Motor neuron (in vitro differentiated cells): ENCODE measurements at regions of chr3 and their contacts with region 1.

Region 1: GRCh38 chr3:128095222-128095703 is 28.3 kb downstream of the RUVBL1 start:
- ATAC-seq: peak; percentile 94 to 100 (median 97)
- H3K4me3 ChIP-seq: no peak overlapping the region
- H3K27ac ChIP-seq: no peak overlapping the region
- H3K4me1 ChIP-seq: peaks cover 0 to 4% of the 10 kb centered on the region in 2 donors

Region 2: DNA sequence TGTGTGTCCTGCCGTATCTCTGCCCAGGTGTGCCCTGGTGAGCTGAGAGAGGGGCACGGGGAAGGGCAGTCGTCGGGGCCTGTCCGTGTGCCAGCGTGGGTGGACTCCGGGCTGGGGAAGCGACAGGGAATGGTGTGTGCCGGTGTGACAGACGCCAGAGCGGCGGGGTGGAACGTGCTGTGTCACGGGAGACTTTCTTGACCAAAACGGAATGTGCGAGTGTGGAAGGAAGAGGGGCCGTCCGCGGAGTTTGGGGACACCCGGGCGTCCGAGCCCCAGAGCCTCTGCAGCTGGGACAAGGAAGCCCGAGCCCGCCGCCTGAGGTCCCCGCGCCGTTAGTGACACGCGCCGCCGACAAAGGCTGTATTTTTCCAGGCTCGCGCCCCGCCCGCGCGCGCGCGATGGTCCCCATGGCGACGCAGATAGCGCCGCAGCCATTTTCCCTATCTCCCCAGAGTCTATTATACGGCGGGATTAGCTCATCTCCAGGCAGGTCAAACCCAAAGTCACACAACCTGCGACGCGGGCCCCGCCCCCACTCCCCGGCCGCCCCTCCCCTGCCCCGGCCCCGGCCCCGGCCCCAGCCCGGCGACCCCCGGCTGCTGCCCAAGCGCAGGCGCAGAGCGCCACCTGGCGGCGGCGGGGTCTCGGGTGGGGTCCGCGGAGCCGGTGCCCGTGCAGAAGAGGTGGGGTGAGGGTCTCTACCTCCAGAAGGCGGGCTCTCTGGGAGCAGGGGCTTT is 402.3 kb after region 1 on chr3:
- in situ Hi-C with region 1: loop called in 1 of 9 experiments (anchors 25 kb)
- ATAC-seq: peak; percentile 69 to 91 (median 84)
- H3K4me3 ChIP-seq: peak overlapping the region; percentile 29 to 46 (median 44)
- H3K27ac ChIP-seq: no peak overlapping the region
- H3K4me1 ChIP-seq: peaks cover 10 to 17% of the 10 kb centered on the region in 2 donors

Region 3: DNA sequence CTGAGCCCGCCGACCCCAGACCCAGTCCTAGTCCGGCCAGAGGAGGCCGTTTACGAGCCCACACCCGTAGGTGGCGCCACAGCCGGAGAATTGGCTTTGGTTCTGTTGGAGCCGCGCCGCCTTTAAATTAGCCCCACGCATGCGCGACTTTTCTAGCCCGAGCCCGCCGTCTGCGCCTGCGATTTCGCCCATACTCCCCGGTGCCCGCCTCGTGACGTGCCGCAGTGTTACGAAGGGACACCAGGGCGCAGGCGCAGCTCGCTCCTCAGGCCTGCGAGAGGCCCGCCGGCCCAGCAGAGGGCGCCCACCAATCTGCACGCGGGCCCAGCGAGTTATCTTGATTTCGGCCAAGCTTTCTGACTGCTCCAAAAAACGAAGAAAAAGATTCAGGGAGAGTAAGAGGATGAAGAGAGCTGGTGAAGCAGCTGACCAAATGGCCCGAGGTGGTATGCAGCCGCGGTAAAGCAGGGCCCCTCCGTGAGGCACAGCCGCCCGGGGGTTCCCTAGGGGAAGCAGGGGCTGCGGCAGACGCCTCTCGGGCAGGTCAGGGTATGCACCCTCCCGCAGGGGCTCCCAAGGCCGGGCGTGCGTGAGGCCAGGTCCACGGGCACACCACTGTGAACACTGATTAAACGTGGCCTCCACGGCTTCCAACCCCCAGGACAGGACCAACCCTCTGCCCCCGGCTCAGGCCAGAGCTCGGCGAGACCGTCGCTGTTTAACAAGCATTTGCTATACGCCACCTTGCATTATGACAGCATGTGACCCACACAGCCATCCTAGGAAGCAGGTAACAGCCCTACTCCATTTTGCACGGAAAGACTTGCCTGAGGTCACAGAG is 522.5 kb after region 1 on chr3:
- in situ Hi-C with region 1: loop called in 1 of 9 experiments (anchors 25 kb)
- ATAC-seq: peak; percentile 87 to 96 (median 93)
- H3K4me3 ChIP-seq: peak overlapping the region; percentile 58 to 92 (median 67)
- H3K27ac ChIP-seq: peak overlapping the region; percentile 69 to 91
- H3K4me1 ChIP-seq: peaks cover 5 to 12% of the 10 kb centered on the region in 2 donors